ENCODE measurements at regions of chr14 and their contacts with region 1.

Region 1: DNA sequence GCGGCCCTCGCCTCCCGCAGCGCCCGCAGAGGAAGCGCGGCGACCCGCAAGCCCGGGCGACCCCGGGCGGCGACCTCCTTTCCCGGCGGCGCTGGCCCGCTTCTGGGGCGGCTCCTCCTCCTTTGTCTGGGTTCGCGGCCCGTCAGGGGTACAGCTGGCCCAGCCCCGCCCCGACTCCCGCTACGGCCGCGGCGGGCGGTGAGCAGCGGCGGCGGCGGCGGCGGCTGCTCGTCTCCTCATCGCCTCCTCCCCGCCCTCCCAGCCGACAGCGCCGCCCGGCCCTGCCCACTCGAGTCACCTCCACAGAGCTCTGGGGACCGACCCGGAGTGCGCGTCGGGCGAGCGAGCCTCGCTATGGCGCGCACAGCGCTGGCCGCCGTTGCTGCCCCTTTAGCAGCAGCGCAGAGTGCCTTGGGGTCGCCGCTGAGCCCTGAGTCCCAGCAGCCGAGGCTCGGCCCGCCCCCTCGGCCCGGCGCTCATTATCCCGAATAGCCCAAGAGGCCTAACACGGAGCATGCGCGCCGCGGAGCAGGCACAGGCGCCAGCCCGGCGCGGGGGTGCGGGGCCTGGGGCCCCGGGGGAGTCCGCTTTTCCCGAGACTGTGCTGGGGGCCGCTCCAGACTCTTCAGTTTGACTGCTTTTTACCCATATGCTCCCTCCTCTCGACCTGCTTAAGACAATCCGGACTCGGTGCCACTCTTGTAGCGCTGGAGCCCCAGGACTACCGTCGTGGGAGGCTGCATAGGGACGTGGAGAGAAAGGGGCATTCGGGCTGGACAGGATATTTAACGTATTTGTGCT is at the start of gene SOS2:
- DNase-seq: peak; percentile 83
- H3K4me3 Mint-ChIP-seq: peak within 1 kb of the TSS; percentile 76
- H3K27ac Mint-ChIP-seq: peak within 1 kb of the TSS; percentile 87
- H3K4me1 Mint-ChIP-seq: peaks cover 33% of the 10 kb centered on the region
- H3K27me3 Mint-ChIP-seq: no peaks in the 10 kb centered on the region
- total RNA-seq, gene SOS2: 20.3 to 22.1 TPM

Region 2: DNA sequence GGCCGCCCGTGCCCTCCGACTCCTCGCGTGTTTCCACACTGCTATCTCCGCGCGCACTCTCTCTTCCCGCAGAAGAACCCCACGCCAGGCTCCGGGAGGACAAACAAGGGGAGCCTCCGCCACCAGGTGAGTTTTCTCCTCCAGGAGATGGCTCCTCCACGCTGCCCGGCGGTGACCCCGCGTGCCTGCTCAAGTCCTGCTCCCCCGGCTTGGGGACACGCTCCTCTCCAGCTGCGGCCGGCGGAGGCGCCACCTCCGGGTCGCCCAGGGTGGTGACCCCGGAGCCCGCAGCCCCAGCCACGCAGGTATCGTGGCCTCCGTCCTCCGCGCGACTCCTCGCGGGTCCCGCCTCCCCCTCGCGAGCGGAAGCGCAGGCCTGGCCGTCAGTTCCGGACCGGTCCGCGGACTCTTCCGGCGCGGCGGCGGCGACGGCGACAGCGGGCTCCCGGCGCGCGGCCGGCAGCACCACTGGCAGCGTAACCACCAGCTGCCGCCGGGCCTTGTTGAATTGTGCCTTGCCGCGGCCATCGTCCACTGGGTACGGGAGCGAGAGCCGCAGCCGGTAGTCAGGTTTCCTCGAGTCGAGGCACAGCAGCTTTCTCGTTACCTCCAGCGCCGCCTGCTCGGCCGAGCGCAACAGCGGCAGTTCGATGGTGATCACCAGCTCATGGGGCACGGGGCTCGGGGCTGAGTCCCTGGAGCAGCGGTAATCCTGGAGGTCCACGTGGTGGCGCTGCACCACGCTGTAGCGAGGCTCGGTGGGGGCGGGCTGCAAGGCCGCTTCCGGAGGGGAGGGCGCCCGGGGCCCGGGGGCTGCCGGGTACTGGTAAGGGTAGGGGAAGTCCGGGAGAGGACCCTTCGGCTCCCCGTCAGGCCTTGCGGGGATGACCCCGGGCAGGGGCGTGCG is 597.8 kb before region 1 on chr14:
- CTCF ChIA-PET with region 1: no interaction called
- intact Hi-C with region 1: loop called (anchors 2 kb)
- DNase-seq: peak; percentile 96
- H3K4me3 Mint-ChIP-seq: peak overlapping the region; percentile 96
- H3K27ac Mint-ChIP-seq: peak overlapping the region; percentile 92
- H3K4me1 Mint-ChIP-seq: peaks cover 50% of the 10 kb centered on the region
- H3K27me3 Mint-ChIP-seq: no peaks in the 10 kb centered on the region

Region 3: DNA sequence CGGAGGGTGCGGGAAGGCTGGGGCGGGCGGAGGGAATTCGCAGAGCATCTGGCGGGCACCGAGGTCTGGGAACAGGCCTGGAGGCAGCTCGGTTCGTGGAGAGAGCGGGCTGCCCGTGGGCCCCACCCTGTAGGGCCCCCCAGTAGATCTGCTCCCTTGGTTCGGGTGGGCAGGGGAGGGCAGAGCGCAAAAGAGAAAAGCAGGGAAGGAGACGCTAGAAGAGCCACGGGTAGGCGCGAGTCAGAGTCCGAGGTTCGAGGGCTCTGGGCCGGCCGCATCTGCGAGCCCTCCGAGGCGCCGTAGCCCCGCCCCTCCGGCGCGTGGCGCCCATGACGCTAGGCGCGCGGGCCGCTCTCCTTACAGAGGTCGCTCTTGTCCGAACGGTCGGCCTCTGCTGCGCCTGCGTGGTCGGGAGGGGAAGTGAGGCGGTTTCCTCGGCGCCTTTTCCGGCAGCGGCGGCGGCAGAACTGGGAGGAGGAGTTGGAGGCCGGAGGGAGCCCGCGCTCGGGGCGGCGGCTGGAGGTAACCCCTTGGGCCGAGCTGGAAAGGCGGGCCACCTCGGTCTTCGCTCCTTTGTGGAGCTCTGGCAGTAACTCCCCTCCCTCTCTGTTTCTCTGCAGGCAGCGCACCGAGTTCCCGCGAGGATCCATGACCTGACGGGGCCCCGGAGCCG is 338.9 kb before region 1 on chr14 and contains the start of gene ARF6:
- CTCF ChIA-PET with region 1: no interaction called
- intact Hi-C with region 1: loop called (anchors 2 kb)
- DNase-seq: peak; percentile 98
- H3K4me3 Mint-ChIP-seq: peak within 1 kb of the TSS; percentile 100
- H3K27ac Mint-ChIP-seq: peak within 1 kb of the TSS; percentile 100
- H3K4me1 Mint-ChIP-seq: peaks cover 19% of the 10 kb centered on the region
- H3K27me3 Mint-ChIP-seq: no peaks in the 10 kb centered on the region
- total RNA-seq, gene ARF6: 128 to 129 TPM

Region 4: GRCh38 chr14:50055461-50056228 is 176.0 kb before region 1 on chr14:
- CTCF ChIA-PET with region 1: no interaction called
- intact Hi-C with region 1: no loop called
- DNase-seq: no peak
- H3K4me3 Mint-ChIP-seq: no peak overlapping the region
- H3K27ac Mint-ChIP-seq: no peak overlapping the region
- H3K4me1 Mint-ChIP-seq: peaks cover 26% of the 10 kb centered on the region
- H3K27me3 Mint-ChIP-seq: no peaks in the 10 kb centered on the region

Region 5: GRCh38 chr14:50116181-50116956 is 115.3 kb before region 1 on chr14 and contains the start of gene VCPKMT:
- CTCF ChIA-PET with region 1: no interaction called
- intact Hi-C with region 1: loop called (anchors 1 kb)
- DNase-seq: peak; percentile 96
- H3K4me3 Mint-ChIP-seq: peak within 1 kb of the TSS; percentile 98
- H3K27ac Mint-ChIP-seq: peak within 1 kb of the TSS; percentile 94
- H3K4me1 Mint-ChIP-seq: peaks cover 32% of the 10 kb centered on the region
- H3K27me3 Mint-ChIP-seq: no peaks in the 10 kb centered on the region
- total RNA-seq, gene VCPKMT: 9.6 to 10.5 TPM

Region 6: DNA sequence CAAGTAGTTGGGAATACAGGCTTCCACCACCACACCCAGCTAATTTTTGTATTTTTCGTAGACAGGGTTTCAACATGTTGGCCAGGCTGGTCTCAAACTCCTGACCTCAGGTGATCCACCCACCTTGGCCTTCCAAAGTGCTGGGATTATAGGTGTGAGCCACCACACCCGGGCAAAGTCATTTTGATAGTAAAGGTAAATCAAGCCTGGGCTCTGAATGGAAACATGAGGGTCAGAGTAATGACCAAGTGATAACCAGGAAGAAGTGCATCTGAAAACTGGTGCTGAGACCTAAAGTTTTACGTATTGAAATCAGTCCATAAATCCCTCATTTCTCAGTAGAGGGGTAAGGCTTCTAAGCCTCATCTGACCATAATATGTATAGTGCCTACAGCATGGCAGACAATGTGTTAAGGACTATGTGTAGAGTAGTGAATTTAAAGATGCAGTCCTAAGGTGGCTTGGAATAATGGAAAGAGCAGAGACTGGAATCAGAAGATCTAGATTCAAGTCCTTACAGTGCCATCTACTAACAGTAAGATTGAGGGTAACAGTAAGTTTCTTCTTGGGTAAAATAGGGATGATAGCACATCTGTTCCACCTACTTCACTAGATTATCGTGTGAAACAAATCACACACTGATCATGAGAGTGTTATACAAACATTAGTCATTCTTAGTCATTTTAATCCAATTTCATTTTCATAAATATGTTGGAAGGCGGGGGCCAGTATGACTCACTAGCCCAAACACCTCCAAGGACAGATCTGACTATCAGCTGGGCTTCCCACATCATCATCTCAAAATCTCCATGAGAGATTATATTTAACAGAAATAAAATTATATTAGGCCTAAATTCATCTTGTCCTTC is 289.5 kb after region 1 on chr14:
- CTCF ChIA-PET with region 1: no interaction called
- intact Hi-C with region 1: loop called (anchors 1 kb)
- DNase-seq: peak; percentile 87
- H3K4me3 Mint-ChIP-seq: no peak overlapping the region
- H3K27ac Mint-ChIP-seq: peak overlapping the region; percentile 89
- H3K4me1 Mint-ChIP-seq: peaks cover 53% of the 10 kb centered on the region
- H3K27me3 Mint-ChIP-seq: no peaks in the 10 kb centered on the region

Region 7: DNA sequence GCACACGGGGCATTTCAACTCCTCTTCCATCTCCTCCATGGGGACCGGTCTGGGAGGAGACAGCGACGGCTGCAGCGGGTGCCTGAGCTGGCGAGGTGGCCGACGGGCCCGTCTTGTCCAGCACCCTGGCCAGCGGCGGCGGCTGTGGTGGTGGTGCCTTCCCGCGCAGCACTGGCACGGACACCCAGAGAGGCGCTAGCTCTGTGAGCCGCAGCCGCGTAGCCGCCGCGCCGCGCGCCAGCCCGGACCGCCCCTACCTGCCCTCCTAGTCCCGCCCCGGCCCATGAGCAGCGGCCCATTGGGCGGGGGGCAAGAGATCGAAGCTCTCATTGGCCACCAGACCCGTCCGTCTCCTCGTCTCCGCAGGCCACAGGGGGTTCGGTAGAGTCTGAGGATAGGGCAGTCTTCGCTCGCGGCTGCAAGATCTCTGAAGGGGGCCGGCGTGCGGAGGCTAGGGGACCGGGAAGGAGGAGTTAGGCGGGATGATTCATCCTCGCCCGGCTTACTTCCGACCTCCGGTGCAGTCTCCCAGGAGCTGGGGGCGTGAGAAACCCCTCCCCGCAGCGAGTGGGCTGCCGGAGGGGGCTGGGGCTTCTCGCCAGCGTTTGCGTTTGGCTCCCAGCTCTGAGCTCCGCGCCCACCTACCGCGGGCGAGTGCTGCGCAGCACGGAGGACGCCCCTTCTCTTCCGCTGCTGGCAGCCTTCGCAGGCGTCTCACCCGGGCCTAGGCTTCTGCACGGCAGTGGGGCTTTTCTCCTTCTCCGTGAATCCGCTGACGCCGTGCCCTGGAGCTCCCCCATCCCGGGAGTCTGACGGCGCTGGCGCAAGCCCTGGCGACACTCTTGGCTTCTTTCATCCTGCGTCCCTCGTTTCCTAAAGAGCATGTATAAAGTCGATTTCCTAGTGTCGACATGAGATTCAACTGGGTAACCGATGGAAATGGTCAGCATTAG is 863.5 kb after region 1 on chr14 and contains the start of gene TRIM9:
- CTCF ChIA-PET with region 1: no interaction called
- intact Hi-C with region 1: loop called (anchors 1 kb)
- DNase-seq: peak; percentile 95
- H3K4me3 Mint-ChIP-seq: peak within 1 kb of the TSS; percentile 86
- H3K27ac Mint-ChIP-seq: peak within 1 kb of the TSS; percentile 65
- H3K4me1 Mint-ChIP-seq: peaks cover 12% of the 10 kb centered on the region
- H3K27me3 Mint-ChIP-seq: peaks cover 13% of the 10 kb centered on the region
- total RNA-seq, gene TRIM9: 0.76 to 1.1 TPM

Region 8: GRCh38 chr14:51147183-51147582 is 915.5 kb after region 1 on chr14:
- CTCF ChIA-PET with region 1: no interaction called
- intact Hi-C with region 1: no loop called
- DNase-seq: no peak
- H3K4me3 Mint-ChIP-seq: no peak overlapping the region
- H3K27ac Mint-ChIP-seq: no peak overlapping the region
- H3K4me1 Mint-ChIP-seq: no peaks in the 10 kb centered on the region
- H3K27me3 Mint-ChIP-seq: peaks cover 2% of the 10 kb centered on the region

Measured in activated naive CD4-positive, alpha-beta T cell treated with anti-CD3 and anti-CD28 coated beads for 36 hours (primary cell).